Activated naive CD4-positive, alpha-beta T cell treated with anti-CD3 and anti-CD28 coated beads for 36 hours (primary cell): ENCODE measurements at regions of chr16 and their contacts with region 1.

Region 1: DNA sequence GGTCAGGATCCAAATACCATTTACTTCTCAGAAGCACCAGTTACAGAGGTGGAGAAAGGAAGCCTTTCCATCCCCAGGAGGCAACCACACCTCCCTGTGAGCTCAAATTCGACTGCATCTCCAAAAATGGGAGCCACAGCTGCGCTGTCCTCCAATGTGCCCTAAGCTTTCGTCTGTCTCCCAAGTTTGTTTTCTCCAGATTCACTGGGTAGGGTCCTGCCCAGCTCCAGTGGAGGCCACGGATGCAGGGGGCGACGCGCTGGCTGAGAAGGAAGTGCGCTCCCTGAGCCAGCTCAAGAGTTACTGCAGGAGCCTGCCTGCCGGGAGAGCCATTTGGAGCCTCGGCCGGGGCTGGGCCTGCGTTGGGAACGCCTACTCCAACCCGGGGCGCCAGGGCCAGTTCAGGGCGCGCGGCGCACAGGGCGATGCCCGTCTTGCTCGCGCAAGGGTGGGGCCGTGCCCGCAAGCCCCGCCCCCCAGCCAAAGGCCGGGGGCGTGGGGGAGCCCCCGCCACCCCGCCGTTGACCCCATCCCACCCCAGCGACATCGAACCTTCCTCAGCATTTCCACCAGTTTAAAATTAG is 19.5 kb downstream of the SIAH1 start:
- DNase-seq: peak; percentile 88
- H3K4me3 Mint-ChIP-seq: peak overlapping the region; percentile 99
- H3K27ac Mint-ChIP-seq: peak overlapping the region; percentile 100
- H3K4me1 Mint-ChIP-seq: peaks cover 65% of the 10 kb centered on the region
- H3K27me3 Mint-ChIP-seq: no peaks in the 10 kb centered on the region

Region 2: GRCh38 chr16:48244080-48244862 is 121.4 kb before region 1 on chr16 and contains the start of gene LONP2:
- CTCF ChIA-PET with region 1: no interaction called
- intact Hi-C with region 1: loop called (anchors 1 kb)
- DNase-seq: peak; percentile 96
- H3K4me3 Mint-ChIP-seq: peak within 1 kb of the TSS; percentile 88
- H3K27ac Mint-ChIP-seq: peak within 1 kb of the TSS; percentile 79
- H3K4me1 Mint-ChIP-seq: peaks cover 38% of the 10 kb centered on the region
- H3K27me3 Mint-ChIP-seq: no peaks in the 10 kb centered on the region
- total RNA-seq, gene LONP2: 49.9 to 53.9 TPM

Region 3: GRCh38 chr16:48353565-48354163 is 12.0 kb before region 1 on chr16:
- CTCF ChIA-PET with region 1: interaction called, 28 read pairs
- intact Hi-C with region 1: no loop called
- DNase-seq: peak; percentile 79
- H3K4me3 Mint-ChIP-seq: no peak overlapping the region
- H3K27ac Mint-ChIP-seq: peak overlapping the region; percentile 54
- H3K4me1 Mint-ChIP-seq: peaks cover 18% of the 10 kb centered on the region
- H3K27me3 Mint-ChIP-seq: no peaks in the 10 kb centered on the region

Region 4: GRCh38 chr16:48385272-48386150 is 19.8 kb after region 1 on chr16 and contains the start of gene SIAH1:
- CTCF ChIA-PET with region 1: interaction called, 5 read pairs
- intact Hi-C with region 1: loop called (anchors 1 kb)
- DNase-seq: peak; percentile 83
- H3K4me3 Mint-ChIP-seq: peak within 1 kb of the TSS; percentile 89
- H3K27ac Mint-ChIP-seq: peak within 1 kb of the TSS; percentile 90
- H3K4me1 Mint-ChIP-seq: peaks cover 22% of the 10 kb centered on the region
- H3K27me3 Mint-ChIP-seq: no peaks in the 10 kb centered on the region
- total RNA-seq, gene SIAH1: 13.7 to 14.6 TPM

Region 5: DNA sequence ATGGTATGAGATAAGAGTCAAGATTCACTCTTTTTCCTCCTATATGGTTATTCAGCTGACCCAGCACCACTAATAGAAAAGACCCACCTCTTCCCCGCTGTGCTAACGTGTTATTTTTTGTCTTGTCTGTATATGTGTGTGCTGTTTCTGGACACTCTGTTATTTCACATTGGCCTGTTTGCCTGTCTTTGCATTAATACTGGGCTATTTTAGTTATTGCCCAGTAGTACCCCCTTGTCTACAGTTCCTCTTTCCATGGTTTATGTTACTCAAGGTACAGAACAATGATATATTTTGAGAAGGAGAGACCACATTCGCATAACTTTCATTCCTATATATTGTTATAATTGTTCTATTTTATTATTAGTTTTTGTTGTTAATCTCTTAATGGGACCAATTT is 93.5 kb after region 1 on chr16:
- CTCF ChIA-PET with region 1: no interaction called
- intact Hi-C with region 1: loop called (anchors 5 kb)
- DNase-seq: no peak
- H3K4me3 Mint-ChIP-seq: no peak overlapping the region
- H3K27ac Mint-ChIP-seq: no peak overlapping the region
- H3K4me1 Mint-ChIP-seq: peaks cover 20% of the 10 kb centered on the region
- H3K27me3 Mint-ChIP-seq: peaks cover 24% of the 10 kb centered on the region

Region 6: DNA sequence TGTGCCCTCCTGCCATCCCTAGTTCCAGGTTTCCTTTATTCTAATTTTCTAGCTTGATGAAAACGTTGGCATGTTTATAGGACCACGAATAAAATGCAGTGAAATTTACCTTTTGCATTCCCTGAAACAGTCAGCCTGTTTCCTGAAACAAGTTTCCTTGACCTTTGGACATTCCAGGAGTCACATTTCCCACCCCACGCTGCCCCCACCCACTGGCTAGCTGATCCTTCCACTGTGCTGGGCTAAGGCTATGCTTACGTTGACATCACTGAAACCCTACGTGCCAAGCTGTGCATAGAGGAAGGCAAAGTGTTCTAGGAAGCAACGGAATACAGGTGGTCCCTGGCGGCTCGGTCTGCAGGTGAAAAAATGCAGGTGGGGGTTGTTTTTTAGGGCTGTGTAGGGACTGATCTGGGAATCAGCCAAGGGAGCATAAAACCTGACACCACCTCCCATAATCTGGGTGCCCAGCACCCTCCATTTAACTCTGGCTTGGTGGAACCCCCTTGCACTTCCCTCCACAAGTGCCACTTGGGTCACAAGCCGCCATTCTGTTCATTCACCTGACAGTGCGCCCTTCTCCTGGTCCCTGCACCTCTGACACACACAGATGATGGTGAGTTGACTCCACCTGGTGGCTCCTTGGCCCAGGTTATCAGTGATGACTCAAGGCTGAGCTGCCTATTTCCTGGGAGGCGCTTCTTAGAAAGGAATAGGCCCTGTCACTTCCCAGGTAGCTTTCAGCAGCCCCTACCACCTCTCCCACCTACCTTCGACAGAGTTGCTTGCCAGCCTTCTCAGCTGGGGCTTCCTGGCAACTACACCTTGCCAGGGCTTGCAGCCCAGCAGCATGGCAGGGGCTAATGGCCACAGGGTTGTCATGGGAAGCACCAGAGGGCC is 160.6 kb after region 1 on chr16:
- CTCF ChIA-PET with region 1: no interaction called
- intact Hi-C with region 1: loop called (anchors 5 kb)
- DNase-seq: peak; percentile 74
- H3K4me3 Mint-ChIP-seq: no peak overlapping the region
- H3K27ac Mint-ChIP-seq: no peak overlapping the region
- H3K4me1 Mint-ChIP-seq: no peaks in the 10 kb centered on the region
- H3K27me3 Mint-ChIP-seq: no peaks in the 10 kb centered on the region

Region 7: GRCh38 chr16:48556913-48557351 is 191.3 kb after region 1 on chr16:
- CTCF ChIA-PET with region 1: no interaction called
- intact Hi-C with region 1: loop called (anchors 5 kb)
- DNase-seq: peak; percentile 43
- H3K4me3 Mint-ChIP-seq: no peak overlapping the region
- H3K27ac Mint-ChIP-seq: peak overlapping the region; percentile 58
- H3K4me1 Mint-ChIP-seq: peaks cover 80% of the 10 kb centered on the region
- H3K27me3 Mint-ChIP-seq: no peaks in the 10 kb centered on the region